AG04449 (cell line): ENCODE measurements at regions of chr20 and their contacts with region 1.

Region 1: GRCh38 chr20:8043687-8044282 is 24.2 kb upstream of the TMX4 start:
- DNase-seq: no peak
- H3K4me3 ChIP-seq: no peak overlapping the region
- CTCF ChIP-seq: peak; percentile 29

Region 2: GRCh38 chr20:7754102-7754501 is 289.7 kb before region 1 on chr20:
- CTCF ChIA-PET with region 1: no interaction called
- POLR2A ChIA-PET with region 1: no interaction called
- DNase-seq: no peak
- H3K4me3 ChIP-seq: no peak overlapping the region
- CTCF ChIP-seq: no peak

Region 3: GRCh38 chr20:8007490-8007889 is 36.3 kb before region 1 on chr20:
- CTCF ChIA-PET with region 1: no interaction called
- POLR2A ChIA-PET with region 1: no interaction called
- DNase-seq: no peak
- H3K4me3 ChIP-seq: no peak overlapping the region
- CTCF ChIP-seq: no peak

Region 4: DNA sequence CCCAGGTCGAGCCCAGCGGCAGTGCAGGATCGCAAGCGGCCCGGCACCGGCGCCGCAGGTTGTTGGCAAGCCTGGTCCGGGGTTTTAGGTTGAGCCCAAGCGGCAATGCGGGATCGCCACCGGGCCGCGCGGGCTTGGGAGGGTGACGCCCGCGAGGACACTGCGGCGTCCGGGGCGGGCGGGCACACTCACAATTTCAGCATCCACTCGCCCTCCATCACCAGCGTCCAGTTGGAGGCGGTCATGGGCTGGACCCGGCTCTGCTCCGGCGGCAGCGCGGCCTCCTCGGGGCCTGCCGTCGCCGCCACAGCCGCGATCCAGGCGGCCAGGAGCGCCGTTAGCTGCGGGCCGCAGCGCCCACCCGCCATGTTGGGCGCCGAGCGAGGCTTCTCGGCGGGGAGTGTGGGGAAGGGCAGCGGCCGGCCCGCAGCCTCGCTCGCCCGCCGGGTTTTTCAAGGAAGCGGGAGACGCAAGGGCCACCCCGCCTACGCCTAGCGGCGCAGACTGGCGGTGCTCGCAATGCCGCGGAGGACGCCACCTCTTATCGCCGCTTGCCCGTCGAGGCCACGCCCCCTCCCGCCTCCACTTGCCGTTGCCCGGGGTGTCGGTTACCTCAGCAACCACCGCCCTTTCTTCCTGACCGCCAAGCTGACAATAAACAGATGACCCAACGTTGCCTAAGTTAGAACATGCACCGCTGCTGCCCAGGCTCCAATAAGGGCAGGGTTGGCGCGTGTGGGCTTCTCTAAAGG is 24.4 kb before region 1 on chr20 and contains the start of gene TMX4:
- CTCF ChIA-PET with region 1: interaction called, 38 read pairs
- POLR2A ChIA-PET with region 1: no interaction called
- DNase-seq: peak; percentile 50
- H3K4me3 ChIP-seq: peak within 1 kb of the TSS; percentile 76
- CTCF ChIP-seq: peak; percentile 50

Region 5: DNA sequence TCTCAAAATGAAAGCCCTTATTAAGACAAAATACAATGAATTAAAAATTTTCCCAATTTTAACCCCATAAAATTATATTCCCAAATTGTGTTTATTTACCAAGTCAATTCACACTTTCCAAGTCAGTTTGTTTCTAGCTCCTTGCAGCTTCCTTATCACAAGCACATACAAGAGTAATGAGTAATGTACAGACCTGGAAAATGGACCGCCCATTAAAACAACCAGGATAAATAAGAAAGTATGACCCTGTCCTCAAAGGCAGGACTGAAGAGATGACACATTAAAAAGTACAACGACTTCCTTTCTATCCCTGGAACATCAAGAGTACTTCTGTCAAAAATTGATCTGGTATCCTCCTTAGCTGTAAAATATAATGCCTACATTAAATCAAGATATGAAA is 22.9 kb after region 1 on chr20:
- CTCF ChIA-PET with region 1: interaction called, 11 read pairs
- POLR2A ChIA-PET with region 1: no interaction called
- DNase-seq: no peak
- H3K4me3 ChIP-seq: no peak overlapping the region
- CTCF ChIP-seq: no peak

Region 6: DNA sequence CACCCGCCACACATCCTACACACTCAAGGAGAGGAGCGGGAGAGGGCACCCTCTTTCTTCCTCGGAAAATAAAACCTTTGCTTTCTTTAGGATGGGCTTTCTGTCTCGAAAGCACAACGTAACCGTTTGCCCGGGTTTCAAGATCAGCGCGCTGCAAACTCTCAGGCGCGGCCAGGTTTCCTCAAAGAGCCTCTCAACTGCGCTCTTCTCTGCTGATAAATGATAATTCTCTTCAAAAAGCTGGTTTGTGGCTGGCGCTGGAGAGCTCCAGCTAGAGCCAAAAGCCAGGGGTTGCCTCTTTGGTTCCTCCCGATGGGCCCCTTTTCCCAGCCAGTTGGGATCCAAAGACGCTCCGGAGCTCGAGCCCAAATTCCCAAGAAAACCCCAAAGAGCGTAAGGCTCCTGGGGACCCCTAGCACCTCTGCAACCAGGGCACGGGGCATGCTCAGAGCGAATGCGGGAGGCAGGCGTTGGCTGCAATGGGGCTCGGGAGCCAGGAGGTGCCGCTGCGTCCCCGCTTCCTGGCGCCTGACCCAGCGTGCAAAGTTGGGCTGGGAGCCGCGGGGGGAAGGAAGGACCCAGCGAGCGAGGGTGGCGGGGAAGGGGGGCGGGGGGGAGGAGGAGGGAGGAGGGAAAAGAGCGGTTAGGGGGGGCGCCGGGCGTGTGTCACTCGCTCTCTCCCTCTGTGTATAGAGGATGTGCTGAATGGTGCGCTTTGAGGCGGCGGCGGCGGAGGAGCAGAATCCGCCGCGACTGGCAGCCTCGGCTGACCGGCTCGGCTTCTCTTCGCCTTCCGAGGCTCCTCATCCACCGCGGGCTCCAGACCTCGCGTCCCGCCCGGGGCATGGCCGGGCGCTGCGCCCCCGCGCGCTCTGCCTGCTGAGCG is 88.1 kb after region 1 on chr20 and contains the start of gene PLCB1:
- CTCF ChIA-PET with region 1: interaction called, 20 read pairs
- POLR2A ChIA-PET with region 1: no interaction called
- DNase-seq: no peak
- H3K4me3 ChIP-seq: peak within 1 kb of the TSS; percentile 76
- CTCF ChIP-seq: peak; percentile 99

Region 7: DNA sequence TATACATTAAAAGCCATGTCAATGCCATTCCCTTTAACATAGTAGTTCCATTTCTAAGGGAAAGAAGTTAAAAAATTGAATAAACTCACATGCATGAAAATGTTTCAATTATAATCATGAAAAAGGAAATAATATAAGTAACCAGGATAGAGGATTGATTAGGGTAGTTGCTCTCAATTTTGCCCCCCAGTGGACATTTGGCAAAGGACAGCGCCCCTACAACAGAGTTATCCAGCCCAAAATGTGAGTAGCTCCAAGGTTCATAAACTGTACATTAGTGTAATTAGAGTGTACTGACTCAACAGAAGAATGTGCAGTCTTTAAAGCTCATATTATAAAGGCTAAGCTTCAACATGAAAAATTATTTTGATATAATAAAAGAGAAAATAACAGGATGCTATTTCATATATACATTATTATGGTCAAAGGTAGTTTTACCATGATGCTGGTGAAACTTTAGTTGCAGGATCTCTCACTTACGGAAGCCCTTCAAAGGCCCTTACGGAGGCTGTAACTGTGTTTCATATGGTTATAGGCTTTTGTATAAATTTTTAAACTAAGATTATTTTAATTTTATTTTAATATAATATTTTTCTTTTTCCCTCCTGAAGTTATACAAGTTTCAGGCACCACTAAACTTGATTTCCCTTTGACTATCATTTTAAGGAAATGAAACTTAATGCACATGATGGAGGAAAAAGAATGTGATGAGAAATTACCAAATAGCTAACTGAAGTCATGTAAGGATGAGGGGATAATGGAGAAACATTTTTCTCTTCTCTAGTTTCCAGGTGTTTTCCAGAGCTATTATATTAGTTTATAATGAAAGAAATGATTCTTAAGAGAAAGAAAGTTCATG is 491.8 kb after region 1 on chr20:
- CTCF ChIA-PET with region 1: interaction called, 11 read pairs
- POLR2A ChIA-PET with region 1: no interaction called
- DNase-seq: no peak
- H3K4me3 ChIP-seq: no peak overlapping the region
- CTCF ChIP-seq: peak; percentile 47